ENCODE measurements at regions of chr14 and their contacts with region 1.

Region 1: GRCh38 chr14:71320107-71320733 is 413.0 kb downstream of the PCNX1 start:
- DNase-seq: peak; percentile 100
- H3K4me3 ChIP-seq: peak within 1 kb of the TSS; percentile 72
- H3K27ac ChIP-seq: peak within 1 kb of the TSS; percentile 86
- H3K4me1 ChIP-seq: peaks cover 63% of the 10 kb centered on the region
- H3K27me3 ChIP-seq: no peaks in the 10 kb centered on the region
- CTCF ChIP-seq: no peak

Region 2: GRCh38 chr14:71403656-71404055 is 83.4 kb after region 1 on chr14:
- CTCF ChIA-PET with region 1: interaction called, 3 read pairs
- POLR2A ChIA-PET with region 1: interaction called, 10 read pairs
- intact Hi-C with region 1: loop called (anchors 5 kb)
- DNase-seq: peak; percentile 52
- H3K4me3 ChIP-seq: no peak overlapping the region
- H3K27ac ChIP-seq: no peak overlapping the region
- H3K4me1 ChIP-seq: peaks cover 31% of the 10 kb centered on the region
- H3K27me3 ChIP-seq: no peaks in the 10 kb centered on the region
- CTCF ChIP-seq: peak; percentile 32; the same call in 1 of the 2 replicates

Region 3: DNA sequence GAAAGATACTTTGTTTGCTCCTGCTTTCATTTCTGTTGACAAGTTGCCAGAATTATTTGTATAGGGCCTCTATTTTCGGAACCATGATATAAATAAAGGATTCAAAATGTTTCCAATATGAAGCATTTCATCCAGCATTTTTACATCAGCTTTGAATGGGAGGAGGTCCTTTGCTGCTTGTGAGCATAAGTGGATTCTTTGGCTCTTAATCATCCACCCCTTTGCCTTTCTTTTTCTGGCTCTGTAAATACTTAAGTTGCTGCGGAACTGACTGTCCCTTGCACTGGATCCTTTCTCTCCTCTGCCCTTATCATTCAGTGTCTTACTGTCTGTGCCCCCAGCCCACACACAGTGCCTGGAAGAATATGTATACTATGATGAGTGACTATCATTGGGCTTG is 254.8 kb after region 1 on chr14:
- CTCF ChIA-PET with region 1: no interaction called
- POLR2A ChIA-PET with region 1: no interaction called
- intact Hi-C with region 1: loop called (anchors 5 kb)
- DNase-seq: peak; percentile 65
- H3K4me3 ChIP-seq: no peak overlapping the region
- H3K27ac ChIP-seq: peak overlapping the region; percentile 19
- H3K4me1 ChIP-seq: peaks cover 51% of the 10 kb centered on the region
- H3K27me3 ChIP-seq: no peaks in the 10 kb centered on the region
- CTCF ChIP-seq: no peak

Region 4: GRCh38 chr14:71753126-71753830 is 433.1 kb after region 1 on chr14:
- CTCF ChIA-PET with region 1: interaction called, 3 read pairs
- POLR2A ChIA-PET with region 1: no interaction called
- intact Hi-C with region 1: loop called (anchors 2 kb)
- DNase-seq: peak; percentile 97
- H3K4me3 ChIP-seq: peak overlapping the region; percentile 18
- H3K27ac ChIP-seq: peak overlapping the region; percentile 2
- H3K4me1 ChIP-seq: peaks cover 3% of the 10 kb centered on the region
- H3K27me3 ChIP-seq: no peaks in the 10 kb centered on the region
- CTCF ChIP-seq: peak; percentile 98

Measured in A673 (cell line).